Posterior cingulate gyrus (tissue), 11 donors: ENCODE measurements at regions of chr2 and their contacts with region 1.

Region 1: GRCh38 chr2:85888684-85889626 is at the start of gene ST3GAL5:
- DNase-seq: peak; percentile 91 to 99 (median 94)

Region 2: GRCh38 chr2:85826990-85827878 is 61.7 kb before region 1 on chr2:
- intact Hi-C with region 1: loop called (anchors 5 kb)
- DNase-seq: peak; percentile 50 to 96 (median 79)

Region 3: GRCh38 chr2:86020984-86021383 is 132.0 kb after region 1 on chr2:
- intact Hi-C with region 1: loop called (anchors 5 kb)
- DNase-seq: peak; percentile 57 to 95 (median 70)

Region 4: DNA sequence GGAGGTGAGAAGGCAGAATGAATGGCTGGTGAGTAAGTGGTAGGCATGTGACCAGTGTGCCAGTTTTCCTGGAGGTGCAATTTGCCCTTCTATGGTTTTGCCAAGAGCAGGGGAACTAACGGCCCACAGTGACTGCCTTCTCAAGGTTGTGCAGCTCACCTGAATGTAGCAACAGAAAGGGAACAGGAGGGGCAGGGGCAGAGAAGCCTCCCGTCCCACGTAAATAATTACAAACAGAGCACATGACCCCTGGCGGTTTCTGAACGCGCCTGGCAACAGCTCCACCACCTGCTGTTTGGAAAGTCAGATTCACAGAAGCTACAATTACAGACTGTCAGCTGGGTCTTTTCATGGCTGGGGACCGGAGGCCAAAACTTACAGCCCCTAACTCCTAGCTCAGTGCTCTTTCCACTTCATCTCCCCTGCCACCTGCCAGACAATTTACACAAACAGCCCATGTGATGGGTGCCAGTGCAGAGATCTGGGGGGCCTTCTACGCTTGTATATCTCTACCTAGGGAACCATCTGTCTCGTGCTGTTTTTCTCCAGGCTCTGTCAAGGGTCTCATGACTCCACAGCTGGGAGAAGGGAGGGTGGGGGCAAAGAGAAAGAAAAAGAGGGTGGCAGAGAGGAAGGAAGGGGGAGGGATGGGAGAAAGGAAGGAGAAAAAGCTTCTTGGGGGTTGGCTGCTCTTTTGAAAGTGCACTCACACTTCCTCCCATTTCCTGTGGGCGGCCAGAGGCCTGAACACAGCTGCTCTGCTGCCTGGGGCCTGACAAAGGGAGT is 147.1 kb after region 1 on chr2:
- intact Hi-C with region 1: loop called (anchors 2 kb)
- DNase-seq: peak in 9 of 10 donors; percentile 41 to 94 (median 58)

Region 5: GRCh38 chr2:86079981-86080911 is 191.3 kb after region 1 on chr2:
- intact Hi-C with region 1: loop called (anchors 1 kb)
- DNase-seq: peak; percentile 54 to 97 (median 84)

Region 6: GRCh38 chr2:86368161-86368824 is 479.3 kb after region 1 on chr2:
- intact Hi-C with region 1: no loop called
- DNase-seq: peak in 7 of 10 donors; percentile 16 to 90 (median 35)

Region 7: GRCh38 chr2:86411396-86411795 is 522.4 kb after region 1 on chr2:
- intact Hi-C with region 1: no loop called
- DNase-seq: no peak